Dorsolateral prefrontal cortex (tissue), 120 donors: ENCODE measurements at regions of chr18 and their contacts with region 1.

Region 1: DNA sequence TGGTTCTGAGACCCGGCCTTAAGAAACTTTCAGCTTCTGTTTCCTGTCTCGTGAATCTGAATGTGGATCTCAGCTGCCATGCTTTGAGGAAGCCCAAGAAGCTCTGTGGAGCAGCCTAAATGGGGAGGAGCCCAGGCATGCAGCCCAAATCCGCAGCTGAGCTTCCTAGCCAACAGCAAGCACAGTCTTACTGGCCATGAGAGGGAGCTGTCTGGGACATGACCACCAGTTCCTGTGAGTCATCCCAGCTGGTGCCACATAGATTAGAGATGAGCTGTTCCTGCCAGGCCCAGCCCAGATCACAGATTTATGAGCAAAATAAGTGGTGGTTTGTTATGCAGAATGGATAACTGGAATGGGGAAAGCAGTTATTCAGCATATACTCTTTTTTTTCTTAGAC is 224.4 kb upstream of the APCDD1 start:
- DNase-seq: no peak
- H3K4me3 ChIP-seq: no peak overlapping the region
- H3K27ac ChIP-seq: no peak overlapping the region
- H3K27me3 ChIP-seq: no peaks in the 10 kb centered on the region
- CTCF ChIP-seq: no peak

Region 2: DNA sequence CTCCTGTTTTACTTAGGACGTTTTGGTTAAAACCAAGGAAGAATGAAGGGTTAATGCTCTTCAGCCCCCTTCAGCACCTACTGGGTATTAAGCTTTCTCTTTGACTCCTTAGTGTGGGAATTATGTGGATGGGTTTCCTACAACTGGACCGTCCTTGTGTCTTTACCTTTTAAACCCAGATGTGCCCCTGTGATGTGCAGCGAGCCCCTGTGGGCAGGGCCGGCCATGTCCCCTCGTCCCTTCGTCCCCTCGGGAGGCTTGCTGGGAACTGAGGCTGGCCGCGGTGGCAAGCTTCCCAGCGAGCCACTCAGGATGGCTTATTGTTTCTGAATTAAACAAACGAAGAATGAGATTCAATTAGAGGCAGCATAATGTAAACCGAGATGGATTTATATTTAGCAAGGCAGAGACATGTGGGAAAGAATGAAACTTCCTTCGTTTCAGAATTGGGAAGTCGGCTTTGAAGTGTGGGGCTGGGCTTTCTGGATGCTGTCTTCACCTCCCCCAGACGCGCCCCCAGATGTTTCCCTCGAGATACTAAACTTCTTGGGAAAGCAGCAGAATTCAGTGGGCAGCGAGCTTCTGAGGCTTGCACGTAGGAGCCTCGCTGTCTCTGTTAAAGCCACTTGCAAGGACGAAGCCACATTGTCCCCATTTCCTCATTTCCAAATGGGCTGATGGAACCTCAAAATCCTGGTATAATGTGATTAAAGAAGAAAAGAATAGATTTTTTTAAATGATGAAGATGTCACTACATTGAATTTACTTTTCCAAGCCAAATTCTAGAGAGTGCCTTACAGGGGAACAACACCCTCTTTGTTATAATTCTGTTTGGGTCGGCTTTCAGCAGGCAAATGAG is 170.2 kb before region 1 on chr18:
- intact Hi-C with region 1: loop called in 1 of 2 experiments (anchors 10 kb)
- DNase-seq: peak in 2 of 10 donors; percentile 23 to 35
- H3K4me3 ChIP-seq: peak overlapping the region in 54 of 59 donors; percentile 0 to 57 (median 36)
- H3K27ac ChIP-seq: peak overlapping the region in 58 of 59 donors; percentile 44 to 92 (median 82)
- H3K27me3 ChIP-seq: peaks cover 0 to 8% (median 0%) of the 10 kb centered on the region in 45 donors
- CTCF ChIP-seq: no peak

Region 3: GRCh38 chr18:10252952-10253705 is 23.1 kb after region 1 on chr18:
- intact Hi-C with region 1: no loop called
- DNase-seq: no peak
- H3K4me3 ChIP-seq: no peak overlapping the region
- H3K27ac ChIP-seq: peak overlapping the region in 8 of 59 donors; percentile 14 to 43 (median 20)
- H3K27me3 ChIP-seq: no peaks in the 10 kb centered on the region
- CTCF ChIP-seq: no peak

Region 4: GRCh38 chr18:10289951-10290637 is 60.0 kb after region 1 on chr18:
- intact Hi-C with region 1: no loop called
- DNase-seq: no peak
- H3K4me3 ChIP-seq: no peak overlapping the region
- H3K27ac ChIP-seq: peak overlapping the region in 6 of 59 donors; percentile 14 to 49 (median 25)
- H3K27me3 ChIP-seq: no peaks in the 10 kb centered on the region
- CTCF ChIP-seq: no peak